Activated CD4-positive, alpha-beta T cell treated with anti-CD3 and anti-CD28 coated beads, Interleukin-2, amount 10 ng/mL, durations not matched to agents 24 days and 14 days (primary cell): ENCODE measurements at regions of chr15 and their contacts with region 1.

Region 1: GRCh38 chr15:34437687-34438086 is at the start of gene GOLGA8A:
- DNase-seq: peak; percentile 95
- H3K4me3 Mint-ChIP-seq: peak within 1 kb of the TSS; percentile 92
- H3K27ac Mint-ChIP-seq: peak within 1 kb of the TSS; percentile 98
- H3K4me1 Mint-ChIP-seq: peaks cover 20% of the 10 kb centered on the region
- H3K27me3 Mint-ChIP-seq: peaks cover 12% of the 10 kb centered on the region
- total RNA-seq, gene GOLGA8A: 244 and 246 TPM in 2 replicates

Region 2: GRCh38 chr15:34241372-34242330 is 196.0 kb before region 1 on chr15:
- intact Hi-C with region 1: loop called (anchors 10 kb)
- DNase-seq: peak; percentile 80
- H3K4me3 Mint-ChIP-seq: no peak overlapping the region
- H3K27ac Mint-ChIP-seq: no peak overlapping the region
- H3K4me1 Mint-ChIP-seq: peaks cover 21% of the 10 kb centered on the region
- H3K27me3 Mint-ChIP-seq: no peaks in the 10 kb centered on the region

Region 3: GRCh38 chr15:34337557-34338306 is 100.0 kb before region 1 on chr15 and contains the start of gene SLC12A6:
- intact Hi-C with region 1: loop called (anchors 10 kb)
- DNase-seq: peak; percentile 98
- H3K4me3 Mint-ChIP-seq: peak within 1 kb of the TSS; percentile 97
- H3K27ac Mint-ChIP-seq: peak within 1 kb of the TSS; percentile 94
- H3K4me1 Mint-ChIP-seq: peaks cover 43% of the 10 kb centered on the region
- H3K27me3 Mint-ChIP-seq: no peaks in the 10 kb centered on the region
- total RNA-seq, gene SLC12A6: 18.4 and 19.4 TPM in 2 replicates

Region 4: DNA sequence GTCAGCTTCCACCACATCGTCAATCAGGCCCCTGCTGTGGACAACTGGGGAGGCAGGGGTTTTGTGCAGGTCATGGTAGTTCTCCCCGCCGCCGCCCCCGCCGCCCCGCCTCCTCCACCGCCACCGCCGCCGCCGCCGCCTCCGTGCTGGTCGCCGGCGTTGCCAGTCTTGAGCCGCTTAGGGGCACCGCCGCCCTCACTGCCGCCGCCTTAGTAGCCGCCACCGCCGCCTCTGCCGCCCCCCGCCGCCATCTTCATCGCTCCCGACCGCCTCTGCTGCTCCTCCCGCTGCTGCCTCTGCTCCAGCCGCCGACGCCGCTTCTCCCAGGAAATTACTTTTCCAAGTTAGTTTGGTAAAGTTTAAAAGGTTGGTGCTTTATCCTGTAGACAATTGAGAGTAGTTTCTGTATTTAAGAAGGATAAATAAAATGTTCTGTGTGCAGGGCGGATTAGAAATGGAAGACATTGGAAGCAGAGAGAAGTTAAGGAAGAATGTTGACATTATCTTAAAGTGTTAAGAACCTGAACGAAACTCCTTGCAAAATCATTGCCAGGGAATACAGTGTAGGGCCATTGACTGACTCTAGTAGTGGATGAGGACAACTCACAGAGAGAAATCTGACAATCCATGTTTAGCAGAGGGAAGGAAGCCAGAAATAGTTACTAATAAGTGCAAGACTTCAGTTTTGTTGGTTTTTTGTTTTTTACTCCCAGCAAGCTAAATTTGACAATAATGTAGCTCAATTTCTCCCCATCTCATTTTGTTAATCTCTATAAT is 52.9 kb after region 1 on chr15:
- intact Hi-C with region 1: loop called (anchors 10 kb)
- DNase-seq: no peak
- H3K4me3 Mint-ChIP-seq: peak overlapping the region; percentile 9
- H3K27ac Mint-ChIP-seq: no peak overlapping the region
- H3K4me1 Mint-ChIP-seq: peaks cover 7% of the 10 kb centered on the region
- H3K27me3 Mint-ChIP-seq: peaks cover 67% of the 10 kb centered on the region

Region 5: GRCh38 chr15:34587717-34588674 is 150.3 kb after region 1 on chr15:
- intact Hi-C with region 1: loop called (anchors 1 kb)
- DNase-seq: peak; percentile 89
- H3K4me3 Mint-ChIP-seq: peak overlapping the region; percentile 86
- H3K27ac Mint-ChIP-seq: peak overlapping the region; percentile 64
- H3K4me1 Mint-ChIP-seq: peaks cover 18% of the 10 kb centered on the region
- H3K27me3 Mint-ChIP-seq: peaks cover 24% of the 10 kb centered on the region